GM12878 (cell line): ENCODE measurements at regions of chr14 and their contacts with region 1.

Region 1: GRCh38 chr14:95196290-95196689 is 39.0 kb upstream of the DICER1 start:
- DNase-seq: no peak
- ATAC-seq: peak; percentile 88
- H3K4me3 ChIP-seq: no peak overlapping the region
- H3K27ac ChIP-seq: no peak overlapping the region
- H3K4me1 ChIP-seq: no peaks in the 10 kb centered on the region
- H3K27me3 ChIP-seq: no peaks in the 10 kb centered on the region
- CTCF ChIP-seq: peak; percentile 30 to 53 (median 52); a peak in 5 of 6 replicates
- EP300 ChIP-seq: no peak
- POLR2A ChIP-seq: no peak
- RAD21 ChIP-seq: peak; percentile 75

Region 2: DNA sequence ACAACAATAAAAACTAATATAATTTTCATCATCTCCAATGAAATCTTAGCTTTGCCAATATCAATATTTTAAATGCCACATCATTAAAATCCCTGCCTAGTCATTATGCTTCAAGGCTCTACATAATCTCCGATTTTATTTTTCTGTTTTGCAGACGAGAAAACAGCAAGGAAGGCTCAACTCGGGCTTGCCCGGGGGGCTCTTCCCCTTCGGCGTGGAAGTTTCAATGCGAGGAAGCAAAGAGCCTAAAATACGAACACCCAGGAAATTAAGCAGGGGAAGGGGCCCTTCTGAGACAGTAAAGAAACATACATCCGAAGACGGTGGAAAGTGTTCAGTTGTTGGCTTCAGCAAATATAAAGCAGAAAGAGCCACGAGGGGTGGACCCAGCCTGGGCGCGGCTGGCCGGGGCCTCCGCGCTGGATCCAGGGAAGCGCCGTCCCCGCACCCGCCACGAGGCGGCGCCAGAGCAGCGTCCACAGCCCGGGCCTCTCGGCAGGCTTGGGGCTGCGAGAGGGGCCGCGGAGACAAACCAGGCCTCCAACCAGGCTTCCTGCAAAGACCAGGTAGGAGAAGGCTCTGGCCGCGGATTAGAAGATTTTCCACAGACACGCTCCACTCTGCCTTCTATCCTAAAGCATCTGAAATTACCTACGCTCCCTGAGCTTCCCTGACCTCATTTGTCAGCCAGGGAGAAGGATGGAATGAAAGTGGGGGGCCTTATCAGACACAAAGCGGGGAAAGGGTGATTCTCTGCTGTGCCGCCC is 506.9 kb before region 1 on chr14:
- CTCF ChIA-PET with region 1: interaction called, 6 read pairs
- POLR2A ChIA-PET with region 1: no interaction called
- RAD21 ChIA-PET with region 1: interaction called, 3 read pairs
- SMC1A ChIA-PET with region 1: no interaction called
- in situ Hi-C with region 1: loop called (anchors 10 kb)
- intact Hi-C with region 1: loop called (anchors 2 kb)
- DNase-seq: no peak
- ATAC-seq: peak; percentile 98
- H3K4me3 ChIP-seq: no peak overlapping the region
- H3K27ac ChIP-seq: no peak overlapping the region
- H3K4me1 ChIP-seq: no peaks in the 10 kb centered on the region
- H3K27me3 ChIP-seq: peaks cover 0 to 2% of the 10 kb centered on the region in 2 experiments; a peak in 1 of 4 replicates
- CTCF ChIP-seq: peak; percentile 79 to 95 (median 85)
- EP300 ChIP-seq: no peak
- POLR2A ChIP-seq: no peak
- RAD21 ChIP-seq: peak; percentile 77

Region 3: DNA sequence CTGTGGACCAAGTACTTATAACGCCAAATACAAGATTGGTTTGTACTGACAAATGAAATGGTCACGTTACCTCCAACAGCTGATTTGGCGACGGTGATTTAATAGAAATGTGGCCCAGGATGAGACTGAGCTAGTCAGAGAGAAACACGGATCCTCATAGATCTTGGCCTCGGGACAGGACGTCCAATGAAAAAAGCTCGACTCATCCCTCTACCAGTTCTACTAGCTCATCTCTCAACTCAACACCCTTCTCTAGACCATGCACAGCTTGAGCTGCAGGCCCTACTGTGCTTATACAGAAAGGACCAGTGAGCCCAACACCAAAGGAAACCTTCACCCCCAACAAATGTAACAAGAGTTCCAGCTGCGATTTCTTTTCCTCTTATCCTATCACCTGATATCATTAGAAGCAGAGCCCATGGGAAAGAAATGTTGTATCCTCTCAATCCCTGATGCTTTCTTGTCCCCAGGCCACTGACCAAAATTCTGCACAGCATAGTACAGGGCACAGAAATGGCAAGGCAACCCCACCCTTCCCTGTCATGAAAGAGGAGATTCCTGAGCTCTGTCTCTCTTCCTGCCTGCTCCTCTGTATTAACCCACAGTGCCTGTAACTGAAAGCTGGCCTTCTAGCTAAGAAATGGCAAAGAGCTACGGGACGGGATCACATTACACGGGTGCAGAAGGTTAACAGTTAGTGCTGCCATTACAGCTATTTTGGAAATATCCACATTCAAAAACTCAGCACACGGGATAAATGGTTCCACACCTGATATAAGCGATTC is 78.2 kb before region 1 on chr14:
- CTCF ChIA-PET with region 1: interaction called, 8 read pairs
- POLR2A ChIA-PET with region 1: no interaction called
- RAD21 ChIA-PET with region 1: interaction called, 15 read pairs
- SMC1A ChIA-PET with region 1: interaction called, 8 read pairs
- in situ Hi-C with region 1: no loop called
- intact Hi-C with region 1: no loop called
- DNase-seq: no peak
- ATAC-seq: no peak
- H3K4me3 ChIP-seq: no peak overlapping the region
- H3K27ac ChIP-seq: no peak overlapping the region
- H3K4me1 ChIP-seq: no peaks in the 10 kb centered on the region
- H3K27me3 ChIP-seq: no peaks in the 10 kb centered on the region
- CTCF ChIP-seq: no peak
- EP300 ChIP-seq: no peak
- POLR2A ChIP-seq: no peak
- RAD21 ChIP-seq: no peak

Region 4: GRCh38 chr14:95174184-95174792 is 22.0 kb before region 1 on chr14:
- CTCF ChIA-PET with region 1: interaction called, 12 read pairs
- POLR2A ChIA-PET with region 1: interaction called, 4 read pairs
- RAD21 ChIA-PET with region 1: interaction called, 7 read pairs
- SMC1A ChIA-PET with region 1: interaction called, 4 read pairs
- in situ Hi-C with region 1: no loop called
- intact Hi-C with region 1: no loop called
- DNase-seq: no peak
- ATAC-seq: peak; percentile 73
- H3K4me3 ChIP-seq: no peak overlapping the region
- H3K27ac ChIP-seq: no peak overlapping the region
- H3K4me1 ChIP-seq: no peaks in the 10 kb centered on the region
- H3K27me3 ChIP-seq: no peaks in the 10 kb centered on the region
- CTCF ChIP-seq: peak in 1 of 3 experiments; percentile 29; a peak in 1 of 6 replicates
- EP300 ChIP-seq: no peak
- POLR2A ChIP-seq: no peak
- RAD21 ChIP-seq: peak; percentile 43; the same call in 1 of the 2 replicates

Region 5: GRCh38 chr14:95206534-95206933 is 10.2 kb after region 1 on chr14:
- CTCF ChIA-PET with region 1: interaction called, 7 read pairs
- POLR2A ChIA-PET with region 1: no interaction called
- RAD21 ChIA-PET with region 1: interaction called, 3 read pairs
- SMC1A ChIA-PET with region 1: interaction called, 18 read pairs
- in situ Hi-C with region 1: no loop called
- intact Hi-C with region 1: no loop called
- DNase-seq: no peak
- ATAC-seq: no peak; the same call in 2 of the 3 replicates
- H3K4me3 ChIP-seq: no peak overlapping the region
- H3K27ac ChIP-seq: no peak overlapping the region
- H3K4me1 ChIP-seq: peaks cover 7% of the 10 kb centered on the region; the same call in 1 of the 2 replicates
- H3K27me3 ChIP-seq: no peaks in the 10 kb centered on the region
- CTCF ChIP-seq: no peak
- EP300 ChIP-seq: no peak
- POLR2A ChIP-seq: no peak
- RAD21 ChIP-seq: no peak